Activated naive CD4-positive, alpha-beta T cell treated with anti-CD3 and anti-CD28 coated beads for 36 hours (primary cell): ENCODE measurements at regions of chr17 and their contacts with region 1.

Region 1: GRCh38 chr17:75250009-75250471 is 11.4 kb downstream of the GGA3 start:
- DNase-seq: peak; percentile 90
- H3K4me3 Mint-ChIP-seq: peak overlapping the region; percentile 61
- H3K27ac Mint-ChIP-seq: peak overlapping the region; percentile 93
- H3K4me1 Mint-ChIP-seq: peaks cover 74% of the 10 kb centered on the region
- H3K27me3 Mint-ChIP-seq: no peaks in the 10 kb centered on the region

Region 2: GRCh38 chr17:75182569-75183450 is 67.2 kb before region 1 on chr17 and contains the start of gene SUMO2:
- CTCF ChIA-PET with region 1: no interaction called
- intact Hi-C with region 1: no loop called
- DNase-seq: peak; percentile 97
- H3K4me3 Mint-ChIP-seq: peak within 1 kb of the TSS; percentile 92
- H3K27ac Mint-ChIP-seq: peak within 1 kb of the TSS; percentile 97
- H3K4me1 Mint-ChIP-seq: peaks cover 40% of the 10 kb centered on the region
- H3K27me3 Mint-ChIP-seq: no peaks in the 10 kb centered on the region
- total RNA-seq, gene SUMO2: 633 to 688 TPM

Region 3: DNA sequence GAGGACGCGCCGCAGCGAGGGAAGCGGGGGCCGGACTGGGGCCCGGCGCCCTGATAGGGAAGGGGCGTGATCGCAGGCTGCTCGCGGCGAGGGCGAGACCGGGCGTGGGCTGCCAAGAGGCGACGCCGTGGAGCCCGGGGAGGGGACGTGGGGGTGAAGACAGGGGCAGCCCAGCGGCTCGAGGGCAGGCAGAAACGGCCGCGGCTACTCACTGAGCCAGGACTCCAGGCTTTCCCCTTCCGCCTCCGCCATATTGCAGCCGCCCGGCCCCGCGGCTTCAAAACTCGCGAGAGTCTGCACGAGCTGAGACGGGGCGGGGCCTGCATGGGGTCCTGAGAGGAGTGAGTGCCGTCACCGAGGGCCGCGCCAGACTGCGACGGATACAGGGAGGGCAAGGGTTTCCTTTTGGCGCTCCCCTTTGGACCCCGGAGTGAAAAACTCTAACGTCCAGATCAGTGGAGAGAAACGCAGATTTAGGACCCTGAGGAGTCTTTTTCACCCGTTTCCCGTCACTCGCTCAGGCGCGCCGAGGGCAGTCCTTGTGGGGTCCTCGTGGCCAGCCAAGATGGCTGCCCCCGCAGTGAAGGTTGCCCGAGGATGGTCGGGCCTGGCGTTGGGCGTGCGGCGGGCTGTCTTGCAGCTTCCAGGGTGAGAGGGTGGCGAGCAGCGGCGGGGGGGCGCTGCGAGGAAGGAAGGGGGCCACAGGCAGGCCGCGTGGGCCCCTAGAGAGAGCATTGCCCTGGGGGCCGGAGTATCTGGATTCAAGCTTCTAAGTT is 11.5 kb after region 1 on chr17 and contains the starts of genes GGA3 and MRPS7:
- CTCF ChIA-PET with region 1: interaction called, 9 read pairs
- intact Hi-C with region 1: loop called (anchors 1 kb)
- DNase-seq: peak; percentile 98
- H3K4me3 Mint-ChIP-seq: peak within 1 kb of the TSS; percentile 93
- H3K27ac Mint-ChIP-seq: peak within 1 kb of the TSS; percentile 99
- H3K4me1 Mint-ChIP-seq: peaks cover 53% of the 10 kb centered on the region
- H3K27me3 Mint-ChIP-seq: no peaks in the 10 kb centered on the region
- total RNA-seq, gene GGA3: 65.7 to 66.1 TPM
- total RNA-seq, gene MRPS7: 73.3 to 78.3 TPM